Activated naive CD4-positive, alpha-beta T cell treated with anti-CD3 and anti-CD28 coated beads, Interleukin-2, amount 10 ng/mL, durations not matched to agents 7 days and 5 days (primary cell): ENCODE measurements at regions of chr9 and their contacts with region 1.

Region 1: GRCh38 chr9:136769710-136770191 is 5.4 kb upstream of the LCN15 start:
- DNase-seq: peak; percentile 70
- H3K4me3 Mint-ChIP-seq: no peak overlapping the region
- H3K27ac Mint-ChIP-seq: no peak overlapping the region
- H3K4me1 Mint-ChIP-seq: peaks cover 13% of the 10 kb centered on the region
- H3K27me3 Mint-ChIP-seq: peaks cover 59% of the 10 kb centered on the region

Region 2: DNA sequence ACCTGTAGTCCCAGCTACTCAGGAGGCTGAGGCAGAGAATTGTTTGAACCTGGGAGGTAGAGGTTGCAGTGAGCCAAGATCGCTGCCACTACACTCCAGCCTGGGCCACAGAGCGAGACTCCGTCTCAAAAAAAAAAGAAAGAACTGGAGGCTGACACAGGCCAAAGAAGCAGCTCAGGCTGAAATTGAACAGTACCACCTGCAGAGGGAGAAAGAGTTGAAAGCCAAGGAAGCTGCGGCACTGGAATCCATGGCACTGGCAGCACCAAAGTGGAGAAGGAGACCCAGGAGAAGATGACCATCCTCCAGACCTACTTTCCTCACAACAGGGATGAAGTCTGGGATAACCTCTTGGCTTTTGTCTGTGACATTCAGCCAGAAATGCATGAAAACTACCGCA is 10.1 kb after region 1 on chr9:
- CTCF ChIA-PET with region 1: interaction called, 20 read pairs
- DNase-seq: no peak
- H3K4me3 Mint-ChIP-seq: no peak overlapping the region
- H3K27ac Mint-ChIP-seq: no peak overlapping the region
- H3K4me1 Mint-ChIP-seq: no peaks in the 10 kb centered on the region
- H3K27me3 Mint-ChIP-seq: peaks cover 42% of the 10 kb centered on the region